Activated CD8-positive, alpha-beta T cell treated with anti-CD3 and anti-CD28 coated beads, Interleukin-2, amount 10 ng/mL, durations not matched to agents 7 days and 5 days (primary cell): ENCODE measurements at regions of chr21 and their contacts with region 1.

Region 1: DNA sequence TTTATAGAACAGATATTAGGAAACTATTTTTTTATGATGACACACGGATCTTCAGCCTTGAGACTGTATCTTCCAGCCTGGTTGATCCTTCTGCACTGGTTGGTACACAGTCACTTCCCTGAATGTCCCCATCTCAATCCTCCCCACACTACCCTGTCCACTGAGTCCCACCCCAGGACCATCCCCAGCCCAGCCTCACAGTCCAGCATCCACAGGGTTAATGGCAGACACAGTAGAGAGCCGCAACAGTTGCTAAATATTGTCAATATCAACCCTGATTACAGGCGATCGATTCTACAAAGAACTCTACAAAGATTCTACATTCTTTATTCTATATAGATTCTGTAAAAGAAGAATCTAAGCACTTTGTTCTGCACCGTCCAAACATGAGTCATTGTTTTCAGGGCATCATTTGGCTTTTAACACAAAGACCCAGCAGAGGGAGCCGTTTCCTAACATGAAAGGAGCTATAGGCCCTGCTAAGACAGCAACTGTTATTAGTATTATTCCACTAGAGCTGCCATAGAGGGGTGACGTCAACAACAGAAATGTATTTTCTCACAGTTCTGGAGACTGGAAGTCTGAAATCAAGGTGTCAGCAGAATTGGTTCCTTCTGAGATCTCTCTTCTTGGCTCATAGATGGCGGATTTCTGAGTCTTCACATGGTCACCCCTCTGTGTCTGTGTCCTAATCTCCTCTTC is 30.1 kb upstream of the IFNAR2 start:
- DNase-seq: peak; percentile 90
- ATAC-seq: peak; percentile 88
- H3K4me3 Mint-ChIP-seq: no peak overlapping the region
- H3K27ac Mint-ChIP-seq: no peak overlapping the region
- H3K4me1 Mint-ChIP-seq: peaks cover 35% of the 10 kb centered on the region
- H3K27me3 Mint-ChIP-seq: peaks cover 8% of the 10 kb centered on the region

Region 2: GRCh38 chr21:32819694-32820093 is 380.0 kb before region 1 on chr21:
- CTCF ChIA-PET with region 1: no interaction called
- POLR2A ChIA-PET with region 1: no interaction called
- DNase-seq: no peak
- ATAC-seq: no peak
- H3K4me3 Mint-ChIP-seq: no peak overlapping the region
- H3K27ac Mint-ChIP-seq: no peak overlapping the region
- H3K4me1 Mint-ChIP-seq: peaks cover 10% of the 10 kb centered on the region
- H3K27me3 Mint-ChIP-seq: no peaks in the 10 kb centered on the region

Region 3: DNA sequence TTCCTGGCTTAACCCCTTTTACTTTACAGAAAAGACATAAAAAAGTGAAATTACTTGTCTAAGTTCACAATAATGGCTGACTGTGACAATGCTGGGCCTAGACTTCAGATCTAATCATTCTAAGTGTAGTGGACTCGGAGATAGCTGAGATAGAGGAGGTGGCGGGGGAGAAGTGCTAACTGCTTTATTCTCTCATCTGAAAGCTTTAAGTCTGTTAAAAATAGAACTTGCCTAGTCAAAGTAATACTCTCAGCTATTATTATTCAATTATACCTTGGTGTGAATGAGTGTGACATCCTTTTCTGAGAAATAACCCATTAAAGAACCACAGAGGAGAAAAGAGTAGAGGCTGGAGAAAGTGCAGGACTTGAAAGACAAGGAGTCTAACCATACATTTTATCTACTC is 270.0 kb before region 1 on chr21:
- CTCF ChIA-PET with region 1: no interaction called
- POLR2A ChIA-PET with region 1: no interaction called
- DNase-seq: no peak
- ATAC-seq: peak; percentile 31
- H3K4me3 Mint-ChIP-seq: no peak overlapping the region
- H3K27ac Mint-ChIP-seq: peak overlapping the region; percentile 74
- H3K4me1 Mint-ChIP-seq: peaks cover 42% of the 10 kb centered on the region
- H3K27me3 Mint-ChIP-seq: no peaks in the 10 kb centered on the region

Region 4: GRCh38 chr21:32940079-32941014 is 259.3 kb before region 1 on chr21:
- CTCF ChIA-PET with region 1: interaction called, 31 read pairs
- POLR2A ChIA-PET with region 1: no interaction called
- DNase-seq: peak; percentile 59
- ATAC-seq: no peak
- H3K4me3 Mint-ChIP-seq: no peak overlapping the region
- H3K27ac Mint-ChIP-seq: no peak overlapping the region
- H3K4me1 Mint-ChIP-seq: peaks cover 6% of the 10 kb centered on the region
- H3K27me3 Mint-ChIP-seq: peaks cover 5% of the 10 kb centered on the region

Region 5: GRCh38 chr21:33185852-33186251 is 13.8 kb before region 1 on chr21:
- CTCF ChIA-PET with region 1: interaction called, 23 read pairs
- POLR2A ChIA-PET with region 1: no interaction called
- DNase-seq: peak; percentile 47
- ATAC-seq: peak; percentile 87
- H3K4me3 Mint-ChIP-seq: peak overlapping the region; percentile 32
- H3K27ac Mint-ChIP-seq: peak overlapping the region; percentile 84
- H3K4me1 Mint-ChIP-seq: peaks cover 27% of the 10 kb centered on the region
- H3K27me3 Mint-ChIP-seq: peaks cover 22% of the 10 kb centered on the region

Region 6: DNA sequence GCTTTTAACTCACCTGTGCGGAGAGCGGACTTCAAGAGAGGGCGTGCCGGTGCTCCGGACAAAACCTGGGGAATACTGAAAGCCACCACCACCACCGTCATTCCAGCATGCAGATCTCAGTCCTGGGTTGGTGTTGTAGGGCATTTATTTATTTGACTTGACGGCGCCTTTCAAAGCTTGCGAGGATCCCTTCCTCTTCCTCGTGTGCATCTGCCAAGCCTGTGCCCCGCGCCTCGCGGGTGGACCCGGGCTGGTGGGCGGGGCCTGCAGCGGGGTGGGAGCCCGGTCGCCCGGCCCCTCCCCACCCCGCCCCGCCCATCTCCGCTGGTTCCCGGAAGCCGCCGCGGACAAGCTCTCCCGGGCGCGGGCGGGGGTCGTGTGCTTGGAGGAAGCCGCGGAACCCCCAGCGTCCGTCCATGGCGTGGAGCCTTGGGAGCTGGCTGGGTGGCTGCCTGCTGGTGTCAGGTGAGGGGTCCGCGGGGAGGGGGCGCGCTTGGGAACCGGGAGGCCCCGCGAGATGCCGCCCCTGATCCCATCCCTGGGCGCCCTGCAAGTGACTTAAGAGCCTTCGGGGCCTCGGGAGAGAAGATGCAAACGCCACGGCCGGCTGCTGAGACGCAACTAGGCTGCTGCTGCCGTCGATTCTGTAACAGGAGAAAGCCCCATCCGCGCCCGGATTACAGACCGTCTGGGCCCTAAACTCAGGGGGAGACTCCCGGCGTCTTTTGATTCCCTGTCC is 66.6 kb after region 1 on chr21 and contains the start of gene IL10RB:
- CTCF ChIA-PET with region 1: interaction called, 12 read pairs
- POLR2A ChIA-PET with region 1: interaction called, 5 read pairs
- DNase-seq: peak; percentile 74
- ATAC-seq: peak; percentile 89
- H3K4me3 Mint-ChIP-seq: peak within 1 kb of the TSS; percentile 96
- H3K27ac Mint-ChIP-seq: peak within 1 kb of the TSS; percentile 93
- H3K4me1 Mint-ChIP-seq: peaks cover 60% of the 10 kb centered on the region
- H3K27me3 Mint-ChIP-seq: no peaks in the 10 kb centered on the region
- total RNA-seq, gene IL10RB: 37.1 to 44.2 TPM

Region 7: GRCh38 chr21:33374450-33375096 is 174.9 kb after region 1 on chr21:
- CTCF ChIA-PET with region 1: interaction called, 21 read pairs
- POLR2A ChIA-PET with region 1: no interaction called
- DNase-seq: peak; percentile 72
- ATAC-seq: peak; percentile 71
- H3K4me3 Mint-ChIP-seq: no peak overlapping the region
- H3K27ac Mint-ChIP-seq: no peak overlapping the region
- H3K4me1 Mint-ChIP-seq: peaks cover 25% of the 10 kb centered on the region
- H3K27me3 Mint-ChIP-seq: peaks cover 24% of the 10 kb centered on the region

Region 8: DNA sequence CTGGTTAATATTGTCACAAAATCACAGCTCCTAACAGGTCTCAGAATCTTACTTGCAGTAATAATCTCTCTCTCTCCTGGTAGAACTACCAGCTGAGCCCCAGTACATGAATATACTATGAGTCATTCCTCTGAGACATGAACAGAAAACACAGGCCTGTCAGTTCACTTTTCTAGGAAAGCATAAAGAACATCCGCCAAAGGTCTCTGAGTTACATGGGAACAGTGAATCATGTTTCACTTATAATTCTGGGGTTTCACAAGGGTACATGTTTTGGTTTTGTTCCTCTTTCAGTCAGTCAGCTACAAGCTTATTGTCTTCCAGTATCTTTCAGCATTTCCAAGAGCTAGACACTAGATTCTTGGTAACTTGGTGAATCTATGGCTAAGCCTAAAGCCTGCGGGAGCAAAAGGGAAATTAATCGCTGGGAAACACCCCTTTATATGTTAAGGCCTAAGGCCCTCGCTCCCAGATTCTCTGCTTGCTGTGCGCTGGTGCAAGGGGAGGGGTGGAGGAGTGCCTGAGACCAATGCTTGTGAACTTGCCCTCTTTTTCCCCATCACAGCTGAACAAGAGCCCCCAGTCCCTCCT is 235.2 kb after region 1 on chr21:
- CTCF ChIA-PET with region 1: interaction called, 18 read pairs
- POLR2A ChIA-PET with region 1: no interaction called
- DNase-seq: peak; percentile 55
- ATAC-seq: peak; percentile 94
- H3K4me3 Mint-ChIP-seq: no peak overlapping the region
- H3K27ac Mint-ChIP-seq: peak overlapping the region; percentile 76
- H3K4me1 Mint-ChIP-seq: peaks cover 27% of the 10 kb centered on the region
- H3K27me3 Mint-ChIP-seq: no peaks in the 10 kb centered on the region